ENCODE measurements at regions of chrX and their contacts with region 1.

Region 1: DNA sequence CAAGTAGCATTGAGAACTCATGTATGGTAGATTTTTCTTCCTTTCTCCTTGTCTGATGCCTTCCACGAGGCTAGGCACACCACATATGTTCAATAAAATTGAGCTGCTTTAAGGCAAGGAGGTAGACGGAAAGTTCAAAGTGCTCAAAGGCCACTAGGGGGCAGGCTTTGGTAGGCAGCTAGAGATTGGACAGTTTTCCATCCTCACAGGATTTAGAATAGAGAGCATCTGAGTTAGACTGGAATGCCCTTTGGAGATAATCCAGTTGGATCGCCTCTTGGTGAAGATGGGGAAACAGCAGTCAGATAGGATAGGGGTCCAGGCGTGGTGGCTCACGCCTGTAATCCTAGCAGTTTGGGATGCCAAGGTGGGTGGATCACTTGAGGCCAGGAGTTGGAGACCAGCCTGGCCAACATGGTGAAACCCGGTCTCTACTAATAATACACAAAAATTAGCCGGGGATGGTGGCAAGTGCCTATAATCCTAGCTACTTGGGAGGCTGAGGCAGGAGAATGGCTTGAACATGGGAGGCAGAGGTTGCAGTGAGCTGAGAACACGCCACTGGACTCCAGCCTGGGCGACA is 30.4 kb downstream of the ELF4 start:
- DNase-seq: peak; percentile 73
- H3K4me3 ChIP-seq: no peak overlapping the region
- H3K27ac ChIP-seq: no peak overlapping the region
- H3K4me1 ChIP-seq: no peaks in the 10 kb centered on the region
- H3K27me3 ChIP-seq: no peaks in the 10 kb centered on the region
- CTCF ChIP-seq: peak; percentile 74

Region 2: GRCh38 chrX:129553619-129554288 is 526.2 kb before region 1 on chrX:
- intact Hi-C with region 1: no loop called
- DNase-seq: no peak
- H3K4me3 ChIP-seq: no peak overlapping the region
- H3K27ac ChIP-seq: no peak overlapping the region
- H3K4me1 ChIP-seq: no peaks in the 10 kb centered on the region
- H3K27me3 ChIP-seq: no peaks in the 10 kb centered on the region
- CTCF ChIP-seq: no peak

Region 3: GRCh38 chrX:130118441-130119311 is 38.8 kb after region 1 on chrX:
- intact Hi-C with region 1: loop called (anchors 5 kb)
- DNase-seq: no peak
- H3K4me3 ChIP-seq: no peak overlapping the region
- H3K27ac ChIP-seq: no peak overlapping the region
- H3K4me1 ChIP-seq: no peaks in the 10 kb centered on the region
- H3K27me3 ChIP-seq: no peaks in the 10 kb centered on the region
- CTCF ChIP-seq: no peak

Region 4: DNA sequence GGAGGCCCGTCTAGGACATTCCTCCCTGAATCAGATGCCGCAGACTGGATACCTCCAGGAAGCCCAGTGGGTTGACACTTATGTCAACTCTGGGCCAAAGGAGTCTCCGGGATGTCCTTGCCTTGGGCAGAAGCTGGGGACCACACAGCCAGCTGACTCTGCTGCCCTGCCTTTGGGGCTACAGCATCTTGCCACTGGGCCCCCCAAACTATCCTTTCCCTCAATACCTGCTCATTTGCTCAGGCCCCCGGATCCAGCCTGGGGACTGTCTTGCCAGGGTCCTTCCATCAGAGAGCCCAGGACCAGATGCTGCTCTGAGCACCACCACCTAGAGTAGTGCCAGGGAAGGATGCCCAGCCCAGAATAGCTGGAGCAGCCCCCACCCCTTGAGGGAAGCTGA is 110.9 kb after region 1 on chrX:
- intact Hi-C with region 1: loop called (anchors 5 kb)
- DNase-seq: no peak
- H3K4me3 ChIP-seq: no peak overlapping the region
- H3K27ac ChIP-seq: no peak overlapping the region
- H3K4me1 ChIP-seq: no peaks in the 10 kb centered on the region
- H3K27me3 ChIP-seq: no peaks in the 10 kb centered on the region
- CTCF ChIP-seq: no peak